ENCODE measurements at regions of chr2 and their contacts with region 1.

Region 1: DNA sequence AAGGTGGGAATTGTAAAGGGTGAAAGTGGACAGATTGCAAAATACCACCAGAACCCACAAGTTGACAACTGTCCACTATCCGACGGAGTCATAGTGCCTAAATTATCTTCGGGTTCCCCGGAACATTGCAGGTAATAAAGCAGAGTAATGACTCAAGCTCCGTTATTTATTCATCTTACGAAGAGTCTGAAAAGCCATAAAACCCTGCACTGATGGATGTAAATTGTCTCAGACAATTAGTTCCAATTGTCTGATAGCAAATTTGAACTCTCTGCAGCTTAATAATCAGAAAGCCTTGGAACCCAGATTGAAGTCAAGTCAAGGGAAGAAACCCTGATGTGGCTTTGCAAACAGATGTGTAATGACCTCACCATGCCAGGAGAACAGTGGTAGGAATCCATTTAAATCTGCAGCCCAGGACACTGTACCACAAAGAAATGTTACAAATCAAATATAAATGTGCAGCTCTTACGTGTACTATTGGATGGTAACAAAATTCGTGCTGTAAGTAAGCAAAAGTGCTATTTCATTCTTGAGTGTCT is 437.3 kb upstream of the SOX11 start:
- DNase-seq: no peak
- H3K4me3 Mint-ChIP-seq: no peak overlapping the region
- H3K27ac Mint-ChIP-seq: no peak overlapping the region
- H3K4me1 Mint-ChIP-seq: no peaks in the 10 kb centered on the region
- H3K27me3 Mint-ChIP-seq: no peaks in the 10 kb centered on the region

Region 2: GRCh38 chr2:5227062-5227699 is 27.7 kb before region 1 on chr2:
- CTCF ChIA-PET with region 1: no interaction called
- POLR2A ChIA-PET with region 1: no interaction called
- intact Hi-C with region 1: no loop called
- DNase-seq: no peak
- H3K4me3 Mint-ChIP-seq: no peak overlapping the region
- H3K27ac Mint-ChIP-seq: no peak overlapping the region
- H3K4me1 Mint-ChIP-seq: no peaks in the 10 kb centered on the region
- H3K27me3 Mint-ChIP-seq: no peaks in the 10 kb centered on the region

Region 3: DNA sequence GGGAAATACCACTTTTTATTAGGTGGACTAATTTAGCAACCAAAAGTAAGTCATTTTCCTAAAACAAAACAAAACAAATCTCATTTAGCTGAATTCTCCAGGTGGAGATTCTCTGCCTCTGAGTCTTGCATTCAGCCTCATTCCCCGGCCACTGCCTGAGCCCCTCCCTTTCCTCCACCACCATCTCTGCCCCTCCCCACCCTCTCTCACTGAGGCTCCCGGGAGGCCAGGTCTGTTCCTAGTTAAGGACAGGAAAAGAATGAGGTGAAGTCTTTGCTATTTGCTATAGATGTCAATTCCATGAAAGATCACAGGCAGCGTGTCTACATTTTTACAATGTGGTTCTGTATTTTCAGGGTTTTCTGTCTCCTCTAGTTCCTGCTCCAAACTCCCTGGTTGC is 354.3 kb after region 1 on chr2:
- CTCF ChIA-PET with region 1: no interaction called
- POLR2A ChIA-PET with region 1: no interaction called
- intact Hi-C with region 1: no loop called
- DNase-seq: no peak
- H3K4me3 Mint-ChIP-seq: no peak overlapping the region
- H3K27ac Mint-ChIP-seq: no peak overlapping the region
- H3K4me1 Mint-ChIP-seq: no peaks in the 10 kb centered on the region
- H3K27me3 Mint-ChIP-seq: no peaks in the 10 kb centered on the region

Region 4: DNA sequence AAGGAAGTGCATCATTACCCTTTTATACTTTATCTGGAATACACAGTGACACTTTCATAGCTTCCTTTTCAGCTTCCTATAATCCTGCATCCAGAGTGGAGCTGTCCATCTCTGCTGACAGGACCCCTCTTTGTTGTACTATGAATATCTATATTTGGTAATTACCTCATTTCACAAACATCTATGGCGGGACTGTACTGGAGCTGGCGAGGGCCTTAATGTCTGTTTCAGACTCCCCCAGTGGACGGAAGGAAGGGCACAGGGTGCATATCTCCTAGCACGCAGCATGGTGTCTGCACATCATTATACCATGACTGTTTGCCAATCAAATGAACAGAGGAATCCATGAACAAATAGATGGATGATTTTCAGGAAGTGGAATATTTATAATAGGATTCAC is 579.6 kb after region 1 on chr2:
- CTCF ChIA-PET with region 1: no interaction called
- POLR2A ChIA-PET with region 1: no interaction called
- intact Hi-C with region 1: loop called (anchors 5 kb)
- DNase-seq: no peak
- H3K4me3 Mint-ChIP-seq: no peak overlapping the region
- H3K27ac Mint-ChIP-seq: no peak overlapping the region
- H3K4me1 Mint-ChIP-seq: no peaks in the 10 kb centered on the region
- H3K27me3 Mint-ChIP-seq: no peaks in the 10 kb centered on the region